ENCODE measurements at regions of chr2 and their contacts with region 1.

Region 1: DNA sequence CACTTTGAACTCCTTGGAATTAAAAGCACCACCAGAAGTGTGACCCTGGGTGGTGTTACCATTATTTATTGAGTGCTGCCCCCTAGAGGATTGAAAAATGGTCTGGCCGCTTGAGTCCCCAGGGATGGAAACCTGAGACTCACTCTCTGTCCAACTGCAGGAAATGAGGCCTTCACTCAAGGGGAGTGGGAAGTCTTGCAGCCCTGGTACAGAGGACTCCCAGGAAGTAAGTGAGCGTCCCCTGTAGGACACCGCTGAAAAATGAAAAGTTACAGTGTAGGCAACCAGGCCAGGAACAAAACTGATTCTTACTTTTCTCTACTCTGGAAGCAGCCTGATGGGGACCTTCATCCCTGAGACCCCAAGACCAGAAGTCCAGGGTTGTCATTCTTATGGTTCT is 2.2 kb upstream of the NRP2 start:
- DNase-seq: peak in 7 of 9 experiments; percentile 19 to 56 (median 33)
- ATAC-seq: no peak
- H3K4me3 ChIP-seq: no peak overlapping the region
- H3K4me3 Mint-ChIP-seq: no peak overlapping the region
- H3K27ac ChIP-seq: no peak overlapping the region
- H3K27ac Mint-ChIP-seq: no peak overlapping the region
- H3K4me1 ChIP-seq: peaks cover 11% of the 10 kb centered on the region
- H3K4me1 Mint-ChIP-seq: peaks cover 21% of the 10 kb centered on the region
- H3K27me3 ChIP-seq: peaks cover 3 to 16% of the 10 kb centered on the region in 2 experiments
- H3K27me3 Mint-ChIP-seq: peaks cover 45% of the 10 kb centered on the region
- CTCF ChIP-seq: peak; percentile 37

Region 2: DNA sequence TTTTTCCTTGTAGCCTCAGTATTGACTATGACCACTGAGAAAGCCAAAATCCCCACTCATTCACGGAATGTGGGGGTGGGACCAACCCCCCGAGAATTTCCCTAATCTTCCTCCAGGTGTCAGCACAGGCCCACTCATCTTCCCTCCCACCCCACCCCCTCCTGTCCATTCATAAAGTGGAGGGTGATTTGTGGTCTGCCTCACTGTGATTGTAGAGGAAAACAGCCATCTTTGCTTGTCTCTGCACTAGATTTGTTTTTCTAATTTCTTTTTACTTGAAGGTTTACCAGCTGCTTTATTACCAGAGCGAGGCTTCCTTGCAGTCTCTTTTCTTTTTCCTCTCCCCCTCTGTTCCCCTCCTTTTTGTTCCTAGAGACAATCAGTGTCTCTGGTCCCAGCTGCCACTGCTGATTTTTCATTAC is 1571.7 kb before region 1 on chr2:
- CTCF ChIA-PET with region 1: no interaction called
- POLR2A ChIA-PET with region 1: no interaction called
- intact Hi-C with region 1: loop called (anchors 5 kb)
- DNase-seq: peak; percentile 5 to 81 (median 45)
- ATAC-seq: peak; percentile 74
- H3K4me3 ChIP-seq: no peak overlapping the region
- H3K4me3 Mint-ChIP-seq: peak overlapping the region; percentile 57
- H3K27ac ChIP-seq: no peak overlapping the region
- H3K27ac Mint-ChIP-seq: no peak overlapping the region
- H3K4me1 ChIP-seq: peaks cover 30% of the 10 kb centered on the region
- H3K4me1 Mint-ChIP-seq: peaks cover 37% of the 10 kb centered on the region
- H3K27me3 ChIP-seq: no peaks in the 10 kb centered on the region
- H3K27me3 Mint-ChIP-seq: no peaks in the 10 kb centered on the region
- CTCF ChIP-seq: peak; percentile 82

Region 3: GRCh38 chr2:204260162-204260877 is 1419.7 kb before region 1 on chr2:
- CTCF ChIA-PET with region 1: interaction called, 12 read pairs
- POLR2A ChIA-PET with region 1: no interaction called
- intact Hi-C with region 1: loop called (anchors 2 kb)
- DNase-seq: peak in 6 of 9 experiments; percentile 33 to 58 (median 40)
- ATAC-seq: peak; percentile 62
- H3K4me3 ChIP-seq: no peak overlapping the region
- H3K4me3 Mint-ChIP-seq: no peak overlapping the region
- H3K27ac ChIP-seq: no peak overlapping the region
- H3K27ac Mint-ChIP-seq: no peak overlapping the region
- H3K4me1 ChIP-seq: no peaks in the 10 kb centered on the region
- H3K4me1 Mint-ChIP-seq: peaks cover 2% of the 10 kb centered on the region
- H3K27me3 ChIP-seq: peaks cover 0 to 2% of the 10 kb centered on the region in 2 experiments
- H3K27me3 Mint-ChIP-seq: peaks cover 29% of the 10 kb centered on the region
- CTCF ChIP-seq: peak; percentile 60

Region 4: GRCh38 chr2:204691911-204692510 is 988.1 kb before region 1 on chr2:
- CTCF ChIA-PET with region 1: interaction called, 6 read pairs
- POLR2A ChIA-PET with region 1: no interaction called
- intact Hi-C with region 1: loop called in 1 of 2 experiments (anchors 5 kb)
- DNase-seq: peak in 2 of 9 experiments; percentile 29 to 44
- ATAC-seq: no peak
- H3K4me3 ChIP-seq: no peak overlapping the region
- H3K4me3 Mint-ChIP-seq: no peak overlapping the region
- H3K27ac ChIP-seq: no peak overlapping the region
- H3K27ac Mint-ChIP-seq: no peak overlapping the region
- H3K4me1 ChIP-seq: peaks cover 5% of the 10 kb centered on the region
- H3K4me1 Mint-ChIP-seq: peaks cover 8% of the 10 kb centered on the region
- H3K27me3 ChIP-seq: no peaks in the 10 kb centered on the region
- H3K27me3 Mint-ChIP-seq: no peaks in the 10 kb centered on the region
- CTCF ChIP-seq: peak; percentile 44

Region 5: DNA sequence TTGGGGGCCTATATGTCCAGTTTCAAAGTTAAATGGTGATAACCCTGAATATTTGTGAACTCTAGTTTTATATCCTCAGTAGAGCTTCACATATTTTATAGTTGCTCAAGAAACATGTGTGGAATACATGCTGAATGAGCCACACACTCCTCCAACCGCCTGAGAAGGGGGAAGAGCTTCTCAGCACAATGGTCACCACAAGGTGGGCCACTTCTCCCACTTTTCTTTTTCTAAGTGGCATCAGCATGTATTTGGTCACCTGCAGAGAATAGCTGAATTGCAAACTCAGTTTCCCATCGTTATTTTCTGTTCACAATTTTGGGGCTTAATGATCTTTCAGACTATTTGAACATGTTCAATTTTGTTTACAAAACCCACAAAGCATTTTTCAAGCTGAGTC is 794.3 kb before region 1 on chr2:
- CTCF ChIA-PET with region 1: interaction called, 5 read pairs
- POLR2A ChIA-PET with region 1: no interaction called
- intact Hi-C with region 1: loop called (anchors 5 kb)
- DNase-seq: peak in 2 of 9 experiments; percentile 19 to 43
- ATAC-seq: no peak
- H3K4me3 ChIP-seq: no peak overlapping the region
- H3K4me3 Mint-ChIP-seq: no peak overlapping the region
- H3K27ac ChIP-seq: no peak overlapping the region
- H3K27ac Mint-ChIP-seq: no peak overlapping the region
- H3K4me1 ChIP-seq: peaks cover 16% of the 10 kb centered on the region
- H3K4me1 Mint-ChIP-seq: peaks cover 26% of the 10 kb centered on the region
- H3K27me3 ChIP-seq: no peaks in the 10 kb centered on the region
- H3K27me3 Mint-ChIP-seq: no peaks in the 10 kb centered on the region
- CTCF ChIP-seq: no peak

Region 6: GRCh38 chr2:205706769-205707381 is 26.8 kb after region 1 on chr2:
- CTCF ChIA-PET with region 1: no interaction called
- POLR2A ChIA-PET with region 1: no interaction called
- intact Hi-C with region 1: no loop called
- DNase-seq: peak in 4 of 9 experiments; percentile 13 to 61 (median 29)
- ATAC-seq: peak; percentile 62
- H3K4me3 ChIP-seq: no peak overlapping the region
- H3K4me3 Mint-ChIP-seq: no peak overlapping the region
- H3K27ac ChIP-seq: no peak overlapping the region
- H3K27ac Mint-ChIP-seq: peak overlapping the region; percentile 82
- H3K4me1 ChIP-seq: peaks cover 14% of the 10 kb centered on the region
- H3K4me1 Mint-ChIP-seq: peaks cover 10% of the 10 kb centered on the region
- H3K27me3 ChIP-seq: no peaks in the 10 kb centered on the region
- H3K27me3 Mint-ChIP-seq: peaks cover 5% of the 10 kb centered on the region
- CTCF ChIP-seq: no peak

Region 7: DNA sequence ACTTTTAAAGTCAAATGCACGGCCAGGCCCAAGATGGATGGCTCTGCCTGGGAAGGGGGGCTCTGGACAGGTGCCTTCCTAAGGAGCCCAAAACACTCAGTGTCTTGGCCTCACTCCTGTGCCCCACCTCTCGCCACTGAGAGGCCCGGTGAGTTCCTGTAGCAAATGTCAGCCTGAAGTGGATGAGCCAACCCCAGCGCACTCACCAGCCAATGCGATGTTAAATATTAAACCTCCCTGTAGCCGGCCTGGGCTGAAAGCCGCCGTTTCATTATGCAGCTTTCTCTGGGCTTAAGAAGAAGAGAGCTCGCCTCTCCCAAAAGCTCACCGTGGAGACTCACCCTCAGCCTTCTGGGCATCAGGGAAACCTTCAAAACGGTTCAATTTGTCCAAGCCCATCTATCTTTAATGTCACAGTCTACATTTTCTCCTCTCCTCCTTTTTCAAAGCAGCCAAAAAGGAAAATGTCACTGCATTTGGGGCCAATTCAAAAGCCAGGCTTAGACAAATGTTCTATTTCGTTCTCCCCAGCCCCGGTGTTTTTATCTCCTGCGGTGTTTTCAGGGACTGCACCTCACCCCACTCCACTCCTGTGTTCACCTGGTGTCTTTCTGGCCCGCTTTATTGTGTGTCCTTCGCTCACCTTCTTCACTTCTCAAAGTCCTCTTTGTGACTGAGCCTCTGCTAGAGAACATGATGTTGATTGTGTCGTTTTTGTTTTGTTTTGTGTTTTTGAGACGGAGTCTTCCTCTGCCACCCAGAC is 126.3 kb after region 1 on chr2:
- CTCF ChIA-PET with region 1: no interaction called
- POLR2A ChIA-PET with region 1: no interaction called
- intact Hi-C with region 1: no loop called
- DNase-seq: no peak
- ATAC-seq: no peak
- H3K4me3 ChIP-seq: no peak overlapping the region
- H3K4me3 Mint-ChIP-seq: no peak overlapping the region
- H3K27ac ChIP-seq: no peak overlapping the region
- H3K27ac Mint-ChIP-seq: no peak overlapping the region
- H3K4me1 ChIP-seq: no peaks in the 10 kb centered on the region
- H3K4me1 Mint-ChIP-seq: no peaks in the 10 kb centered on the region
- H3K27me3 ChIP-seq: peaks cover 0 to 2% of the 10 kb centered on the region in 2 experiments
- H3K27me3 Mint-ChIP-seq: no peaks in the 10 kb centered on the region
- CTCF ChIP-seq: no peak